ENCODE measurements at regions of chr2 and their contacts with region 1.

Region 1: GRCh38 chr2:216416571-216417307 is 4.5 kb downstream of the SMARCAL1 start:
- DNase-seq: no peak
- ATAC-seq: no peak

Region 2: GRCh38 chr2:216371756-216372702 is 44.7 kb before region 1 on chr2 and contains the start of gene MARCHF4:
- intact Hi-C with region 1: no loop called
- DNase-seq: peak; percentile 75
- ATAC-seq: peak; percentile 84
- total RNA-seq, gene MARCHF4: 0.08 TPM

Region 3: GRCh38 chr2:216453955-216454614 is 37.3 kb after region 1 on chr2:
- intact Hi-C with region 1: no loop called
- DNase-seq: no peak
- ATAC-seq: no peak

Region 4: GRCh38 chr2:216465580-216466197 is 49.0 kb after region 1 on chr2:
- intact Hi-C with region 1: loop called (anchors 5 kb)
- DNase-seq: no peak
- ATAC-seq: no peak